GM23248 (cell line): ENCODE measurements at regions of chr3 and their contacts with region 1.

Region 1: GRCh38 chr3:193788189-193788991 is 195.4 kb downstream of the OPA1 start:
- DNase-seq: peak; percentile 75
- H3K4me3 ChIP-seq: no peak overlapping the region
- H3K27ac ChIP-seq: no peak overlapping the region
- H3K4me1 ChIP-seq: no peaks in the 10 kb centered on the region
- H3K27me3 ChIP-seq: peaks cover 44% of the 10 kb centered on the region

Region 2: GRCh38 chr3:193693774-193694173 is 94.6 kb before region 1 on chr3:
- in situ Hi-C with region 1: no loop called
- DNase-seq: no peak
- H3K4me3 ChIP-seq: no peak overlapping the region
- H3K27ac ChIP-seq: no peak overlapping the region
- H3K4me1 ChIP-seq: no peaks in the 10 kb centered on the region
- H3K27me3 ChIP-seq: no peaks in the 10 kb centered on the region

Region 3: DNA sequence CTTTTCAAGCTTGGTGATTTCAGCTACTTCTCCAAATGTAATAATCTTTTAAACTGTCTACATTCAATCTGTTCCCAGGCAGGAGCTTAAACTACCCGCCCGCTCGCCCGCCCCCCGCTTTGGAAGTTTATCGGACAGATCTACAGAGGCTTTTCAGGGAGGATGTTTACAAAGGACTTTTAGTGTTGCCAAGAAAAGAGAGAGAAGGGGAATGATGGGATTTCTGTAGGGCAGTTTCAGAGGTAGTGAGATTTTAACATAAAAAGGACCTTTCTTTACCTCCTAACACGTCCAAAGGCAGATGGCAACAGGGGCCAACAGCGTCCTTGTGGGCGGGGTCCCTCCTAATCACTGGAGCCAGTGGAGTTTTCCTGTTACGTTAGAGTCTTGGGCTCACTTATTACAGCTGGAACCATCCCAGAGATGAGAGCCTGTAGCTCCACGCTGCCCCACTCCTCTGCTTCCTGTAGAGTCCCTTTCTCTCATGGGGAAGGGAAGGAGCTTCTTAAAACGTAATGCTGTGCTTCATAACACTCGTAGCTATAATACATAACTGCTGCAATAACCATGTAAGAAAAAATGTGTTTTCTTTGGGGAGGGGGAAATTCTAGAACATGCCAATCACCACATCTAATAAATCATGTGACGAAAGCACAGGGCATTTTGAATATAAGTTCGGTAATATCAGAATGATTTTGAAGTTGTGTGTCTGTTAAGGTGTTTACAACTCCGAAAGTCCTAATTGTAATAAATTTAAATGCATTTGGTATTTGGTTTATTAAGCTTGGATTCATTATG is 378.5 kb after region 1 on chr3:
- in situ Hi-C with region 1: loop called (anchors 25 kb)
- DNase-seq: peak; percentile 7
- H3K4me3 ChIP-seq: no peak overlapping the region
- H3K27ac ChIP-seq: no peak overlapping the region
- H3K4me1 ChIP-seq: no peaks in the 10 kb centered on the region
- H3K27me3 ChIP-seq: peaks cover 67% of the 10 kb centered on the region

Region 4: GRCh38 chr3:194315088-194315964 is 526.9 kb after region 1 on chr3:
- in situ Hi-C with region 1: loop called (anchors 5 kb)
- DNase-seq: peak; percentile 88
- H3K4me3 ChIP-seq: peak overlapping the region; percentile 70
- H3K27ac ChIP-seq: no peak overlapping the region
- H3K4me1 ChIP-seq: no peaks in the 10 kb centered on the region; the same call in none of the 2 replicates
- H3K27me3 ChIP-seq: peaks cover 47% of the 10 kb centered on the region